Calu3 (cell line): ENCODE measurements at regions of chr4 and their contacts with region 1.

Region 1: GRCh38 chr4:122898370-122899150 is 23.8 kb downstream of the NUDT6 start:
- DNase-seq: peak; percentile 37
- H3K4me3 Mint-ChIP-seq: no peak overlapping the region
- H3K27ac Mint-ChIP-seq: peak overlapping the region; percentile 86
- H3K4me1 Mint-ChIP-seq: peaks cover 10% of the 10 kb centered on the region
- H3K27me3 Mint-ChIP-seq: no peaks in the 10 kb centered on the region
- CTCF ChIP-seq: no peak

Region 2: DNA sequence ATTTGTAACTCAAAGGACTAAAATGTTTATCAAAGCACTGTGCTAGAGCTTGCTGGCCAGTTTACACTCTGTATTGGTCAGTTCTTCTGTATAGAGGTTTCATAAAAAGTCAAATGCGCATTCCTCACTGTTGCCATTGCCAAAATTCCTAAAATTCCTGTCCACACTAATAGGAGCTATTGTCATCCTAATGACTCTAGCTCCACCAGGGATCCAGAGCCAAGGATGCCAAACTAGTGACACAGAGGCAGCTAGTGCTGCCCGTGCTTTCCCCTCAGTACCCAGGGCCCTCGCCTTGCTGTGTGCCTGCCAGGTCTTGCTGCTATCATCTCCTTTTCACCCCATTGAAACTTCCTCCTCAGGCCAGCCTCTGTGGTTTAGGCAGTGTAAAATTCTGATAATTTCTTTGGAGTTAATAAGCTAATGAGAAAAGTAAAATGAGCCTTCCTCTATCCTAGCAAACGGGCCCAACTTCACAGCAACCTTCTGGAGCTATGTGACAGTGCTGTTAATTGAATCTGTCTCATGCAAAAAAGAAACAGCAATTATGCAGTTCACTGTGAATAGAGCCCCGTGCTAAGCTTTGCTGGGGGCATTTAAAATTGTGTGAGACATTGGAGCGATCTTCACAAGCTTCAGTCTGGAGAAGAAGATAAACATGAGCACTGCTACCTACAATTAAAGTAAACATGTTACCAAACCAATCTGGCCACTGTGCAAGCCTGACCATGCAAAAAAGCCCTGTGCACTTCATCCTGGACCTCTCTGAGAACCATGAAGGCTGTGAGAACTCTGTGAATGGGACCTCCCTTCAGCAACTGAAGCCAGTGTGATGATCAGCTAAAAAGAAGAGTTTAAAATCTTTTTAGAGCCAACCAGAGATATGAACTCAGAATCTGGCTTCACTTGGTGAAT is 115.0 kb before region 1 on chr4:
- CTCF ChIA-PET with region 1: no interaction called
- intact Hi-C with region 1: loop called (anchors 10 kb)
- DNase-seq: peak; percentile 70
- H3K4me3 Mint-ChIP-seq: peak overlapping the region; percentile 2
- H3K27ac Mint-ChIP-seq: peak overlapping the region; percentile 85
- H3K4me1 Mint-ChIP-seq: peaks cover 38% of the 10 kb centered on the region
- H3K27me3 Mint-ChIP-seq: no peaks in the 10 kb centered on the region
- CTCF ChIP-seq: no peak

Region 3: DNA sequence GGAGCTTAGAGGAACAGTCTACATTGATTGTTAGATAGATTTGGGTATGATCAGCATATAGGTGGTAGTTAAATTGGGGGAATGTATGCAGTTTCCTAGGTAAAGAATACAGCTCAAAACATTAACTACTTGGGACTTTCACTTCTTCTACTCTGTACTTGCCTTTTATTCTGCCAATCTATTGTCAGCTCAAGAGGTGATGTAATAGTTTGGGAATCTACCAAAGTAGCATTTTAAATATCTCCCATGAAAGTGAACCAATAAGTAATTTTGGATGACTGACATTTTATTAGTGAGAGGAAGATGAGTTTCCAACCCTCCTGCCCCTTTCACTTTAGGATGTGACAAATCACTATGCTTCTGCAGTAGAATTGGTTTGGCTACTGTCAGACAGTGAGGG is 19.6 kb before region 1 on chr4:
- CTCF ChIA-PET with region 1: no interaction called
- intact Hi-C with region 1: no loop called
- DNase-seq: no peak
- H3K4me3 Mint-ChIP-seq: no peak overlapping the region
- H3K27ac Mint-ChIP-seq: no peak overlapping the region
- H3K4me1 Mint-ChIP-seq: peaks cover 16% of the 10 kb centered on the region
- H3K27me3 Mint-ChIP-seq: no peaks in the 10 kb centered on the region
- CTCF ChIP-seq: no peak